ENCODE measurements at regions of chr3 and their contacts with region 1.

Region 1: DNA sequence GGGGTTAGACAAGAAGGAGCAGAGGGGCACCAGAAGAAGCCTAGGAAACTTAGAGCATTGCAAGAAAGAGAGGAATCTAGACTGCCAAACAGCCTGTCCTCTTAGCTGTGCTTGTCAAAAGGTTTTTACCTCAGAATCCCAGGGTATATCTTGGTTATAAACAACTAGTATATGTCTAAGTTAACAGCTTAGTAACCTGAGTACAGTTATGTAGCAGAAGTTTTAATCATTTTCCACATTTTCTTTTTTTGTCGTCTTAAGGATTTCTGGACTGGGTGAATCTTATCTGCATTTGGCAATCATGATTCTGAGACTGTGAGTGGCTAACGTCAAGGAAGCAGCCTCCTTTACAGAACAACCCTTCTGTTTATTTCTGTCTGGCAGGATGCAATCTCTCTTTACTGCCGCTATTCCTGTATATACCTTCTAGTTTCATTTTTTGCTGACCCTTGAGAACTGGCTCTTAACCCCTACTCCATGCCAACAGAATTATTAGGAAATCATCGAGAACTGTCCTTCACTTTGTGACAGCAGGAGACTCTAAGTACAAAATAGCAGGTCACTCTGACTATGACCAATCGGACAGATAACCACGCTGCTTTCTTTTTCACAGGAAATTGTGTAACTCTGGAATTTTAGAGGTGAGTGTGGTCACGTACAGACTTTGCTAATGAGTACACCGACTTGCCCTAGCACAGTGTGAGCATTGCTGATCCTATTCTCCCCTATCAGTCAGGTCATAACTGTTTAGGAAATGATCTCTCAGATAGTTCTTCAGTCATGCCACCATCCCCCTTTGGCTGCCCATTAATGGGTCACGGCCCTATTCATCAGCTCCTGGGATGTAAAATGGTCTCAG is 3.3 kb upstream of the CP start:
- DNase-seq: peak; percentile 46
- H3K4me3 Mint-ChIP-seq: peak overlapping the region; percentile 78
- H3K27ac Mint-ChIP-seq: peak overlapping the region; percentile 89
- H3K4me1 Mint-ChIP-seq: peaks cover 30% of the 10 kb centered on the region
- H3K27me3 Mint-ChIP-seq: peaks cover 2% of the 10 kb centered on the region

Region 2: GRCh38 chr3:149129326-149130205 is 95.4 kb before region 1 on chr3 and contains the start of gene HPS3:
- intact Hi-C with region 1: loop called (anchors 1 kb)
- DNase-seq: peak; percentile 84
- H3K4me3 Mint-ChIP-seq: peak within 1 kb of the TSS; percentile 92
- H3K27ac Mint-ChIP-seq: peak within 1 kb of the TSS; percentile 88
- H3K4me1 Mint-ChIP-seq: peaks cover 39% of the 10 kb centered on the region
- H3K27me3 Mint-ChIP-seq: peaks cover 33% of the 10 kb centered on the region
- total RNA-seq, gene HPS3: 15.8 and 17.3 TPM in 2 replicates

Region 3: DNA sequence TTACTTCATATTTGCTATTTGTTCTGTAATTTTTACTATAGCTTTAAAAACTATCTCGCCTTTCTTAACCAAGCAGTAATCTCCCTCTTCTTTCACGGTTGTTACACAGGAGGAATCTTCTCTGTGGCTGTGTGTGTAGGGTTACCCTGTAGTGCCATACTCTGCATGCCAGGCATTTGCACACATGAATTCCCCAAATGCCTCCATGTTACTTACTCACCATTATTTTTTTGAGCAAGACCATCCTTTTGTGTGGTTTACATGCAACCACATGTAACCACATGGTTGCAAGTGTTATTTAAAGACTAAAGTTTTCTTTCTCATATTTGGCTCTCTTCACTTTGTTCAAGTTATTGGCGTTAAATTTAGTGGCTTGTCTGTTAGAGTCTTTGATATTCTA is 50.1 kb before region 1 on chr3:
- intact Hi-C with region 1: loop called (anchors 2 kb)
- DNase-seq: peak; percentile 2
- H3K4me3 Mint-ChIP-seq: no peak overlapping the region
- H3K27ac Mint-ChIP-seq: no peak overlapping the region
- H3K4me1 Mint-ChIP-seq: peaks cover 8% of the 10 kb centered on the region
- H3K27me3 Mint-ChIP-seq: no peaks in the 10 kb centered on the region

Region 4: GRCh38 chr3:149203758-149204157 is 21.2 kb before region 1 on chr3:
- intact Hi-C with region 1: loop called (anchors 1 kb)
- DNase-seq: no peak
- H3K4me3 Mint-ChIP-seq: no peak overlapping the region
- H3K27ac Mint-ChIP-seq: no peak overlapping the region
- H3K4me1 Mint-ChIP-seq: peaks cover 20% of the 10 kb centered on the region
- H3K27me3 Mint-ChIP-seq: peaks cover 44% of the 10 kb centered on the region

Region 5: GRCh38 chr3:149245738-149246451 is 20.9 kb after region 1 on chr3:
- intact Hi-C with region 1: loop called (anchors 1 kb)
- DNase-seq: no peak
- H3K4me3 Mint-ChIP-seq: peak overlapping the region; percentile 16
- H3K27ac Mint-ChIP-seq: peak overlapping the region; percentile 51
- H3K4me1 Mint-ChIP-seq: peaks cover 37% of the 10 kb centered on the region
- H3K27me3 Mint-ChIP-seq: peaks cover 4% of the 10 kb centered on the region